MCF 10A (cell line): ENCODE measurements at regions of chr4 and their contacts with region 1.

Region 1: DNA sequence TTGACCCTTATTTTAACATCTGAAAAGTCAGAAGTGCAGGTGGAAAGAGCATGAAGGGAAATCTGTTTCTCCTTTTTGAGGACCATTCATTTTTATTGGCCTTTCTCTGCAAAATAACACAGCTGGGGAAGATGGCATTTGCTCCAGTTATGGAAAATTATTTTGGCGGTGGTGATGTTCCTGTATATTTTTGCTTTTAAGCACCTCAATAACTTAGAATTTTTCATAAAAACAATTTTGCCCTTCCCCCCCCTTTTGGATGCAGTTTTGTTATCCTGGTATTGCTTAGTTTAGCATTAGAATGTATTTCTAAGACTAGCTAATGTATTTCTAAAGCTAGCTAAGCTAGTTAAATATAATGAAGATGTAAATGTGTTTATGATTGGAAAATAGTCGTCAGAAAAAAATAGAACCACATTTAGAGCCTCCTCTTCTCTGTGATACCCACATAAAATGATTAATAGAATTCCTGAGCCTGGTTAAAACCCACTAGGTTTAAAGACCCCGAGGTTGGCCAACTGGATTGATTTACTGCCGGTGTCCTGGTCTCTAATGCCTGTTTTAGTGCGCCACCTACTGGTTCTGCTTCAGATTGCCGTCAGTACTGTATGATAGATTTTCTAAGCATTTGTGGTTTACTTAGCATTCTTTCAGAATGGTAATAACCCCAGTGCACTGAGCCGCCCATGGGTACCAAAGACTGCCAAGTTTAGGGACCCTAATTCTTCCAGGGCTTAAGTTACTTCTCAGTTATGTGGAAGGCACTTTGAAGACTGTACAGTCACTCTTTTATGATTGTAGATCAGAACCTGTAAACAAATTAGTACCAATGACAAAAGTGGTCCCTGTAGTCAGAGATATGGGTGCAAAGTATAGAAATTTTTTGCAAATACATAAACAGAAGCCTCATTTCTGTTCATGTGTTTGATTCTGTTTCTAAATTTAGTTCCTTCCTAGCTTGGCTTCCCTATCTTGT is 11.4 kb downstream of the KLF3 start:
- DNase-seq: peak; percentile 87
- H3K4me3 Mint-ChIP-seq: peak overlapping the region; percentile 45
- H3K27ac Mint-ChIP-seq: no peak overlapping the region
- H3K4me1 Mint-ChIP-seq: peaks cover 68% of the 10 kb centered on the region
- H3K27me3 Mint-ChIP-seq: no peaks in the 10 kb centered on the region
- CTCF ChIP-seq: peak; percentile 84

Region 2: GRCh38 chr4:38313999-38314561 is 361.4 kb before region 1 on chr4:
- CTCF ChIA-PET with region 1: interaction called, 60 read pairs
- POLR2A ChIA-PET with region 1: interaction called, 192 read pairs
- intact Hi-C with region 1: no loop called
- DNase-seq: peak; percentile 89
- H3K4me3 Mint-ChIP-seq: no peak overlapping the region
- H3K27ac Mint-ChIP-seq: peak overlapping the region; percentile 44
- H3K4me1 Mint-ChIP-seq: peaks cover 47% of the 10 kb centered on the region
- H3K27me3 Mint-ChIP-seq: no peaks in the 10 kb centered on the region
- CTCF ChIP-seq: no peak

Region 3: GRCh38 chr4:38523524-38524448 is 151.6 kb before region 1 on chr4:
- CTCF ChIA-PET with region 1: no interaction called
- POLR2A ChIA-PET with region 1: no interaction called
- intact Hi-C with region 1: loop called (anchors 1 kb)
- DNase-seq: no peak
- H3K4me3 Mint-ChIP-seq: no peak overlapping the region
- H3K27ac Mint-ChIP-seq: no peak overlapping the region
- H3K4me1 Mint-ChIP-seq: no peaks in the 10 kb centered on the region
- H3K27me3 Mint-ChIP-seq: no peaks in the 10 kb centered on the region
- CTCF ChIP-seq: no peak

Region 4: GRCh38 chr4:38663801-38664705 is 11.4 kb before region 1 on chr4 and contains the start of gene KLF3:
- CTCF ChIA-PET with region 1: interaction called, 10 read pairs
- POLR2A ChIA-PET with region 1: interaction called, 51 read pairs
- intact Hi-C with region 1: no loop called
- DNase-seq: peak; percentile 83
- H3K4me3 Mint-ChIP-seq: peak within 1 kb of the TSS; percentile 92
- H3K27ac Mint-ChIP-seq: peak within 1 kb of the TSS; percentile 76
- H3K4me1 Mint-ChIP-seq: peaks cover 11% of the 10 kb centered on the region
- H3K27me3 Mint-ChIP-seq: no peaks in the 10 kb centered on the region
- CTCF ChIP-seq: no peak
- total RNA-seq, gene KLF3: 45.3 and 51.2 TPM in 2 replicates

Region 5: DNA sequence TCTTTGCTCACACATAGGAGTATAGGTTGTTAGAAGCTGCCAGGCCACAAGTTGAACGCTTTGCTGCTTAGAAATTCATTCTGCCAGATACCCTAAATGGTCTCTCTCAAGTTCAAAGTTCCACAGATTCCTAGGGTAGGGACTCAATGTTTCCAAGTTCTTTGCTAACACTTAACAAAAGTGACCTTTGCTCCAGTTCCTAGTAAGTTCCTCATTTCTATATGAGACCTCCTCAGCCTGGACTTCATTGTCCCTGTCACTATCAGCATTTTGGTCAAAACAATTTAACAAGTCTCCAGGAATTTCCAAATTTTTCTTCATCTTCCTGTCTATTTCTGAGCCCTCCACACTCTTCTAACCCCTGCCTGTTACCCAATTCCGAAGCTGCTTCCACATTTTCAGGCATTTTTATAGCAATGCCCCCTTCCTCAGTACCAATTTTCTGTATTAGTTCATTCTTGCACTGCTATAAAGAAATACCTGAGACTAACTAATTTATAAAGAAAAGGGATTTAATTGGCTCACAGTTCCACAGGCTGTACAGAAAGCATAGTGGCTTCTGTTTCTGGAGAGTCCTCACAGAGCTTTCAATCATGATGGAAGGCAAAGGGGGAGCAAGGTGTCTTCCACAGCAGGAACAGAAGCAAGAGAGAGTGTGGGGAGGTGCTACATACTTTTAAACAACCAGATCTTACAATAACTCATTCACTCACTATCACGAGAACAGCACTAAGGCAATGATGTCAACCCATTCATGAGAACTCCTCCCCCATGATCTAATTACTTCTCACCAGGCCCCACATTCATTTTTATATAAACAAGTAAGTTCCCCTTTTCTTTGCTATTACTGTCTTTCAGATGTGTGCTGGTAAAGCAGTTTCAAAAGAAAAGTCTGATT is 140.7 kb after region 1 on chr4:
- CTCF ChIA-PET with region 1: no interaction called
- POLR2A ChIA-PET with region 1: no interaction called
- intact Hi-C with region 1: no loop called
- DNase-seq: no peak
- H3K4me3 Mint-ChIP-seq: no peak overlapping the region
- H3K27ac Mint-ChIP-seq: no peak overlapping the region
- H3K4me1 Mint-ChIP-seq: peaks cover 7% of the 10 kb centered on the region
- H3K27me3 Mint-ChIP-seq: no peaks in the 10 kb centered on the region
- CTCF ChIP-seq: no peak

Region 6: DNA sequence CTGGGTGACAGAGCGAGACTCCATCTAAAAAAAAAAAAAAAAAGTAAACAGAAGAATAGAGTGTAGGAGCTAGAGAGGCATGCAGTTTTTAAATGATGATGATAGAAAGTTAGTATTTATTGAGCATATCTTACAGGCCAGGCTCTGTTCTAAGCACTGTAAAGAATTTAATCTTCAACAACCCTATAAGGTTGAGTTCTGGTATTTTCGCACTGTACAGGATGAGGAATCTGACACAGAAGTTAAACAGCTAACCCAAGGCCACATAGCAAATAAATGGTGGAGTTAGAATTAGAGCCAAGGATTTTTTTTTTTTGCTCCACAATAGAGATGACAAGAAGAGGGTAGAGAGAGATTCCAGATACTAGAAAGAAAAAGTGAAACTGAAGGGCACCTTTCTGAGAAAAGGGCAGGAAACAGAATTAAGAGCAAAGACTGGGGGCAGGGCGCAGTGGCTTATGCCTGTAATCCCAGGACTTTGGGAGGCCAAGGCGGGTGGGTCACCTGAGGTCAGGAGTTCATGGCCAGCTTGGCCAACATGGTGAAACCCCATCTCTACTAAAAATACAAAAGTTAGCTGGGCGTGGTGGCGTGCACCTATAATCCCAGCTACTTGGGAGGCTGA is 442.7 kb after region 1 on chr4:
- CTCF ChIA-PET with region 1: no interaction called
- POLR2A ChIA-PET with region 1: no interaction called
- intact Hi-C with region 1: no loop called
- DNase-seq: no peak
- H3K4me3 Mint-ChIP-seq: no peak overlapping the region
- H3K27ac Mint-ChIP-seq: peak overlapping the region; percentile 18
- H3K4me1 Mint-ChIP-seq: no peaks in the 10 kb centered on the region
- H3K27me3 Mint-ChIP-seq: no peaks in the 10 kb centered on the region
- CTCF ChIP-seq: no peak